Activated CD4-positive, alpha-beta T cell treated with anti-CD3 and anti-CD28 coated beads, Interleukin-2, amount 10 ng/mL, durations not matched to agents 7 days and 5 days (primary cell): ENCODE measurements at regions of chrX and their contacts with region 1.

Region 1: DNA sequence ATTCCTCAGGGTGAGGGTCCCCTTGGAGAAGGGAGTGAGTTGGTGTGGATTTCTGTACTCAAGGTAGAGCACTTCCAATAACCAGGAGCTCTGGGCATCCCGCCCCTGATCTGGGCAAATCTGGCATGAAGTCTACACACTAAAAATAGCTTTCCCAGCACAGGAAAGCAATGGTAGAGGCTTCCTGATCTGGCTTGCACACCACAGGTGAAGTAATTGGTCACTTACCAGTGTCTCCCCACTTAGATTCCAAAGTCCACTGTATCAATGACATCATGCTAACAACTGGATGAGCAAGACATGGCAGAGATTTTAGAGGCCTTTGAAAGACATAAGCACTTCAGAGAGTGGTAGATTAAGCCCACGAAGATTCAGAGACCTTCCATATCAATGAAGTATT is 17.8 kb upstream of the IDS start:
- DNase-seq: no peak
- H3K4me3 Mint-ChIP-seq: no peak overlapping the region
- H3K27ac Mint-ChIP-seq: no peak overlapping the region
- H3K4me1 Mint-ChIP-seq: peaks cover 56% of the 10 kb centered on the region
- H3K27me3 Mint-ChIP-seq: no peaks in the 10 kb centered on the region

Region 2: GRCh38 chrX:149512225-149512885 is 10.6 kb before region 1 on chrX:
- CTCF ChIA-PET with region 1: interaction called, 19 read pairs
- POLR2A ChIA-PET with region 1: no interaction called
- DNase-seq: peak; percentile 59
- H3K4me3 Mint-ChIP-seq: no peak overlapping the region
- H3K27ac Mint-ChIP-seq: peak overlapping the region; percentile 54
- H3K4me1 Mint-ChIP-seq: peaks cover 54% of the 10 kb centered on the region
- H3K27me3 Mint-ChIP-seq: peaks cover 6% of the 10 kb centered on the region